HCT116 (cell line): ENCODE measurements at regions of chr16 and their contacts with region 1.

Region 1: DNA sequence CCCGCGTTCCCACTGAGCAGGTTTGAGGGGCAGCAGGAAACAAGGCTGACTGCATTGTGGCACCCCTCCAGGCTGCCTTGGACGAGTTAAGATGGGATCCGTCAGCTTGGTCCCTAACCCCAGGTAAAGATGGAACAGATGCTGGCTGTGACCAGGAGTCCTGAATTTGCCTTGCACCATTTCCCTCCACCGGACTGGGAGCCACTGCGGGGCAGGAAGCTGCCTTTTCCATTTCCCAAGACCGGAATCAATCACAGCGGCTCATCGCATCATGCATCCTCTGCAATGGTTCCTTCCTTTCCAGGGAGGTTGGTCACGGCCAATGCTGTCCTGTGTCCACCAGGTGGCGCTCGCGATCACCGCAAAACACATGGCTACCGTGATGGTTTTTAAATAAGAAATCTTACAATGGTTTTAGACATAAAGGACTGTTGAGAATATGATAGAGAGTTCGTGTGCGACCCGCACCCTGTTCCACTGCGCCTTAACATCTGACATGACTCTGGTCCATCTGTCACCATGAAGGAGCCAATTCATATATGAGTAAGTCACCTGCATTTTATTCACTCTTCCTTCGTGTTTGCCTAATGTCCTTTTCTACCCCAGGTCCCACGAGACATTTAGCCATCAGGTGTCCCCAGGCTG is 6.8 kb upstream of the MEAK7 start:
- DNase-seq: peak; percentile 72
- ATAC-seq: peak; percentile 85
- H3K4me3 ChIP-seq: peak overlapping the region; percentile 12 to 13; a peak in 2 of 4 replicates
- H3K27ac ChIP-seq: no peak overlapping the region
- H3K4me1 ChIP-seq: peaks cover under 1 to 24% of the 10 kb centered on the region in 2 experiments
- H3K27me3 ChIP-seq: no peaks in the 10 kb centered on the region
- CTCF ChIP-seq: peak in 2 of 3 experiments; percentile 99 to 100; a peak in 4 of 6 replicates
- POLR2A ChIP-seq: no peak
- RAD21 ChIP-seq: no peak

Region 2: GRCh38 chr16:84156342-84156784 is 354.9 kb before region 1 on chr16:
- CTCF ChIA-PET with region 1: no interaction called
- POLR2A ChIA-PET with region 1: no interaction called
- RAD21 ChIA-PET with region 1: no interaction called
- intact Hi-C with region 1: no loop called
- DNase-seq: no peak
- ATAC-seq: peak; percentile 60
- H3K4me3 ChIP-seq: no peak overlapping the region
- H3K27ac ChIP-seq: no peak overlapping the region
- H3K4me1 ChIP-seq: peaks cover 0 to 10% of the 10 kb centered on the region in 2 experiments; a peak in 2 of 4 replicates
- H3K27me3 ChIP-seq: peaks cover 7% of the 10 kb centered on the region; the same call in 1 of the 2 replicates
- CTCF ChIP-seq: 0 out of 6 replicates have a peak, but pooled peaks of 1 of the 3 experiments have one; percentile 17
- POLR2A ChIP-seq: no peak
- RAD21 ChIP-seq: no peak

Region 3: GRCh38 chr16:84617791-84618580 is 106.7 kb after region 1 on chr16 and contains the start of gene COTL1:
- CTCF ChIA-PET with region 1: interaction called, 44 read pairs
- POLR2A ChIA-PET with region 1: interaction called, 6 read pairs
- RAD21 ChIA-PET with region 1: interaction called, 7 to 13 read pairs
- intact Hi-C with region 1: loop called (anchors 1 kb)
- DNase-seq: peak; percentile 96
- ATAC-seq: peak; percentile 76
- H3K4me3 ChIP-seq: peak within 1 kb of the TSS; percentile 82 to 85
- H3K27ac ChIP-seq: peak within 1 kb of the TSS; percentile 86
- H3K4me1 ChIP-seq: peaks cover 18 to 64% of the 10 kb centered on the region in 2 experiments
- H3K27me3 ChIP-seq: no peaks in the 10 kb centered on the region
- CTCF ChIP-seq: no peak
- POLR2A ChIP-seq: peak; percentile 85
- RAD21 ChIP-seq: no peak
- total RNA-seq, gene COTL1: 276 TPM

Region 4: GRCh38 chr16:84629580-84629979 is 118.3 kb after region 1 on chr16:
- CTCF ChIA-PET with region 1: no interaction called
- POLR2A ChIA-PET with region 1: no interaction called
- RAD21 ChIA-PET with region 1: no interaction called
- intact Hi-C with region 1: no loop called
- DNase-seq: no peak
- ATAC-seq: no peak
- H3K4me3 ChIP-seq: no peak overlapping the region
- H3K27ac ChIP-seq: no peak overlapping the region
- H3K4me1 ChIP-seq: no peaks in the 10 kb centered on the region
- H3K27me3 ChIP-seq: no peaks in the 10 kb centered on the region
- CTCF ChIP-seq: no peak
- POLR2A ChIP-seq: no peak
- RAD21 ChIP-seq: no peak